Activated CD8-positive, alpha-beta memory T cell treated with anti-CD3 and anti-CD28 coated beads, Interleukin-2, amount 10 ng/mL, durations not matched to agents 7 days and 5 days (primary cell): ENCODE measurements at regions of chr3 and their contacts with region 1.

Region 1: GRCh38 chr3:16290007-16290826 is 25.2 kb downstream of the OXNAD1 start:
- DNase-seq: peak; percentile 74
- ATAC-seq: peak; percentile 9
- H3K4me3 Mint-ChIP-seq: peak overlapping the region; percentile 90
- H3K27ac Mint-ChIP-seq: peak overlapping the region; percentile 96
- H3K4me1 Mint-ChIP-seq: peaks cover 70% of the 10 kb centered on the region
- H3K27me3 Mint-ChIP-seq: no peaks in the 10 kb centered on the region

Region 2: GRCh38 chr3:16300881-16301359 is 10.7 kb after region 1 on chr3:
- CTCF ChIA-PET with region 1: interaction called, 65 read pairs
- DNase-seq: peak; percentile 81
- ATAC-seq: peak; percentile 84
- H3K4me3 Mint-ChIP-seq: peak overlapping the region; percentile 78
- H3K27ac Mint-ChIP-seq: peak overlapping the region; percentile 94
- H3K4me1 Mint-ChIP-seq: peaks cover 95% of the 10 kb centered on the region
- H3K27me3 Mint-ChIP-seq: no peaks in the 10 kb centered on the region

Region 3: GRCh38 chr3:16309558-16309957 is 19.3 kb after region 1 on chr3:
- CTCF ChIA-PET with region 1: interaction called, 134 read pairs
- DNase-seq: peak; percentile 76
- ATAC-seq: peak; percentile 87
- H3K4me3 Mint-ChIP-seq: peak overlapping the region; percentile 57
- H3K27ac Mint-ChIP-seq: peak overlapping the region; percentile 93
- H3K4me1 Mint-ChIP-seq: peaks cover 90% of the 10 kb centered on the region
- H3K27me3 Mint-ChIP-seq: no peaks in the 10 kb centered on the region

Region 4: GRCh38 chr3:16319307-16319706 is 29.1 kb after region 1 on chr3:
- CTCF ChIA-PET with region 1: interaction called, 134 read pairs
- DNase-seq: peak; percentile 92
- ATAC-seq: peak; percentile 93
- H3K4me3 Mint-ChIP-seq: no peak overlapping the region
- H3K27ac Mint-ChIP-seq: peak overlapping the region; percentile 74
- H3K4me1 Mint-ChIP-seq: peaks cover 59% of the 10 kb centered on the region
- H3K27me3 Mint-ChIP-seq: no peaks in the 10 kb centered on the region

Region 5: DNA sequence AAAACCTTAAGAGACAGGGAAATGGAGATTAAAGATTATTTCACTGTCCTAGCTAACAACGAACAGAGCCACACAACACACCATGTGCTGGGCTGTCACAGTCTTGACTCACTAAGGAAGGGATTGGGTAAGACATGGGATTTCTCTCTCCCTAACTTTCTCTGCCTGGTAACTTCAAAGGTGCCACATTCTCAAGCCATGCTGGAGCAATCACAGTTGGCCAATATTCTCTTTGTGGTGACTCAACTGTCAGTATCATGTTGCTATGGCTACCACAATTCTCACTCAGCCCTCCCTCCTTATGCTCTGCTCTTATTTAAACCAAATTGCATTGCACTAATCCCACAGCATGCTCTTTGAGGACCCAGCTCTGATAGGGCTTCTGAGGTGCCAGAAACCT is 48.8 kb after region 1 on chr3:
- CTCF ChIA-PET with region 1: interaction called, 10 read pairs
- DNase-seq: peak; percentile 48
- ATAC-seq: peak; percentile 35
- H3K4me3 Mint-ChIP-seq: no peak overlapping the region
- H3K27ac Mint-ChIP-seq: peak overlapping the region; percentile 74
- H3K4me1 Mint-ChIP-seq: peaks cover 49% of the 10 kb centered on the region
- H3K27me3 Mint-ChIP-seq: no peaks in the 10 kb centered on the region

Region 6: GRCh38 chr3:16550676-16551341 is 260.6 kb after region 1 on chr3:
- CTCF ChIA-PET with region 1: interaction called, 20 read pairs
- DNase-seq: peak; percentile 85
- ATAC-seq: peak; percentile 98
- H3K4me3 Mint-ChIP-seq: no peak overlapping the region
- H3K27ac Mint-ChIP-seq: peak overlapping the region; percentile 78
- H3K4me1 Mint-ChIP-seq: peaks cover 13% of the 10 kb centered on the region
- H3K27me3 Mint-ChIP-seq: peaks cover 6% of the 10 kb centered on the region

Region 7: DNA sequence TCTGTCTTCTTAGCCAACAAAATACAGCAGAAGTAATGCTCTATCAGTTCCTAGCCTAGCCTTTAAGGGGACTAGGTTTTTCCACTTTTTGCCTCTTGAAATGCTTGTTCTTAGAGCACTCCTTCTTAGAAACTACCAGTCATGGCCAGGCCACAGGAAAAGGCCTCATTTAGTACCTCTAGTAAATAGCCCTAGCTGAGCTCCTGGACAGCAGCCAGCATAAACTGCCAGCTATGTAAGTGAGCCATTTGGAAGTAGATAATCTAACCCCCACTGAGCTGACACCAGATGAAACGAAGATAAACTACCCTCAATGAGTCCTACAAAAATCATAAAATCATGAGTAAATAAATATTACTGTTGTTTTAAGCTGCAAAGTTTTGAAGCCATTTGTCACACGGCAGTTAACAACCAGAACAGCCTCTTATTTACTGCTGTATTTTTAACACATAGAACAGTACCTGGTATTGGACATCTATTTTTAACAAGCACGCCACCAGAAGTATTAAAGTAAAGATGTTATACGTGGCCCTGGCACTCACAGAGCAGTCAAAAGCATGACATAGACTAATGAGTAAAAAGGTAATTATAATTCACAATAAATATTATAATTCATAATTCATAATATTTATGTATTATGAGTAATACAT is 1440.2 kb after region 1 on chr3:
- CTCF ChIA-PET with region 1: no interaction called
- DNase-seq: no peak
- ATAC-seq: no peak
- H3K4me3 Mint-ChIP-seq: no peak overlapping the region
- H3K27ac Mint-ChIP-seq: no peak overlapping the region
- H3K4me1 Mint-ChIP-seq: peaks cover 28% of the 10 kb centered on the region
- H3K27me3 Mint-ChIP-seq: no peaks in the 10 kb centered on the region